ENCODE measurements at regions of chr19 and their contacts with region 1.

Region 1: GRCh38 chr19:55385740-55386529 is at the start of gene RPL28:
- DNase-seq: peak; percentile 94
- H3K4me3 ChIP-seq: peak within 1 kb of the TSS; percentile 86 to 97
- H3K27ac ChIP-seq: peak within 1 kb of the TSS; percentile 98
- H3K4me1 ChIP-seq: peaks cover 25 to 51% of the 10 kb centered on the region in 2 experiments; a peak in 3 of 4 replicates
- H3K27me3 ChIP-seq: no peaks in the 10 kb centered on the region
- CTCF ChIP-seq: no peak
- EP300 ChIP-seq: no peak
- RAD21 ChIP-seq: no peak
- polyA plus RNA-seq, gene RPL28: 2,297 and 2,368 TPM in 2 replicates

Region 2: GRCh38 chr19:55289117-55289796 is 96.7 kb before region 1 on chr19:
- CTCF ChIA-PET with region 1: interaction called, 20 read pairs
- POLR2A ChIA-PET with region 1: interaction called, 3 read pairs
- DNase-seq: peak; percentile 33
- H3K4me3 ChIP-seq: no peak overlapping the region
- H3K27ac ChIP-seq: no peak overlapping the region
- H3K4me1 ChIP-seq: peaks cover 0 to 7% of the 10 kb centered on the region in 2 experiments; a peak in 1 of 4 replicates
- H3K27me3 ChIP-seq: no peaks in the 10 kb centered on the region
- CTCF ChIP-seq: no peak
- EP300 ChIP-seq: no peak
- RAD21 ChIP-seq: no peak

Region 3: GRCh38 chr19:55312621-55313512 is 73.1 kb before region 1 on chr19:
- CTCF ChIA-PET with region 1: no interaction called
- POLR2A ChIA-PET with region 1: no interaction called
- DNase-seq: peak; percentile 30
- H3K4me3 ChIP-seq: no peak overlapping the region
- H3K27ac ChIP-seq: no peak overlapping the region
- H3K4me1 ChIP-seq: no peaks in the 10 kb centered on the region
- H3K27me3 ChIP-seq: no peaks in the 10 kb centered on the region
- CTCF ChIP-seq: no peak
- EP300 ChIP-seq: no peak
- RAD21 ChIP-seq: no peak

Region 4: DNA sequence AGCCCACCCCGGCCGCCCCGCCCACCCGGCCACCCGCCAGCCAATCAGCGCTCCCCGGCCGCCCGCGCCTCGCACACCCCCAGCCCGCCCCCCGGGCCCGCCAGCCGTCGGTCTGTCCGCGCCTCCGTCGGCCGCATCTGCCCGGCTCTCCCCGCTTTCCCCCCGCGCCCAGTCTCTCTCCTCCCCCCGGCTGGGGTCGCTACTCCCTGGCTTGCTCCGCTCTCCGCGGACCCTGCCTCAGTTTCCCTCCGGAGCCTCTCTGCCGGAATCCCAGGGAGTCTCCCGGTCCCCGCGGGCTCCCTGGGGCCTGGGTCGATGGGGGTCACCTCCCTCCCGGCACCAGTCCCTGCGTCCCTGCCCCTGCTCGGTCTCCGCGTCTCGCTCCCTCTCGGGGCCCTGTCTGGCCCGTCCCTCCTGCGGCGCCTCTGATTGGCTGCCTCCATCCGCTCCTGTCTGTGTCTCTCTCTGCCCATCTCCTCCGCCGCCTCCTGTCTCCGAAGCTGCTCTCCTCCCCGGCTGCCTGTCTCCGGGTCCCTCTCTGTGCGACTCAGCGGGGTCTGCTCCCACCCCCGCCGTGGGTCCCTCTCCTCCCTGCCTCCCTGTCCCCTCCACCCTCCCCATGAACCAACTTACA is 16.1 kb before region 1 on chr19:
- CTCF ChIA-PET with region 1: interaction called, 12 read pairs
- POLR2A ChIA-PET with region 1: interaction called, 3 read pairs
- DNase-seq: peak; percentile 96
- H3K4me3 ChIP-seq: peak overlapping the region; percentile 57 to 79
- H3K27ac ChIP-seq: peak overlapping the region; percentile 11 to 88; a peak in 3 of 4 replicates
- H3K4me1 ChIP-seq: peaks cover 26 to 28% of the 10 kb centered on the region in 2 experiments; a peak in 3 of 4 replicates
- H3K27me3 ChIP-seq: no peaks in the 10 kb centered on the region
- CTCF ChIP-seq: no peak
- EP300 ChIP-seq: no peak
- RAD21 ChIP-seq: no peak

Region 5: DNA sequence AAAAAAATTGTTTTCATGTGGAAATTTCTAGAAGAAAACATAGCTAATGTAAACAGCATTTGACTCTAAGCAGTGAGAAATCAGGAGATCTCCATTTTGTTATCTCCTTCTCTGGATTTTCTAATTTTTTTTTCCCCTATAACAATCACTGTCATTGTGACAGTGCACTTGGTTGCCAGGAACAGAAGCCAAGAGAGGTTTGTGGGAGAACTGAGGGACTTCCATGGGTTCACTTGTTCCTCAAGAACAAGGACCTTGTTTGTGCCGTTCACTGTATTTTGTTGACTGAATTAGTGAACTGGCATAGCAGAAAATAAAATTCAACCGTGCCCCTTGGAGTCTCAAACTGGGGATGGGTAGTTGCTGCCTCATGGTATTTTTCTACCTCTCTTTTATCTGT is 40.1 kb after region 1 on chr19:
- CTCF ChIA-PET with region 1: no interaction called
- POLR2A ChIA-PET with region 1: no interaction called
- DNase-seq: no peak
- H3K4me3 ChIP-seq: no peak overlapping the region
- H3K27ac ChIP-seq: no peak overlapping the region
- H3K4me1 ChIP-seq: no peaks in the 10 kb centered on the region
- H3K27me3 ChIP-seq: no peaks in the 10 kb centered on the region; the same call in 1 of the 2 replicates
- CTCF ChIP-seq: no peak
- EP300 ChIP-seq: no peak
- RAD21 ChIP-seq: no peak

Region 6: GRCh38 chr19:55461259-55461973 is 75.5 kb after region 1 on chr19 and contains the start of gene ISOC2:
- CTCF ChIA-PET with region 1: no interaction called
- POLR2A ChIA-PET with region 1: no interaction called
- DNase-seq: peak; percentile 97
- H3K4me3 ChIP-seq: peak within 1 kb of the TSS; percentile 76 to 98
- H3K27ac ChIP-seq: peak within 1 kb of the TSS; percentile 90 to 91
- H3K4me1 ChIP-seq: peaks cover 9 to 18% of the 10 kb centered on the region in 2 experiments; a peak in 2 of 4 replicates
- H3K27me3 ChIP-seq: no peaks in the 10 kb centered on the region
- CTCF ChIP-seq: no peak
- EP300 ChIP-seq: no peak
- RAD21 ChIP-seq: no peak
- polyA plus RNA-seq, gene ISOC2: 60.9 and 65.4 TPM in 2 replicates

Measured in SK-N-SH (cell line).